ENCODE measurements at regions of chr7 and their contacts with region 1.

Region 1: DNA sequence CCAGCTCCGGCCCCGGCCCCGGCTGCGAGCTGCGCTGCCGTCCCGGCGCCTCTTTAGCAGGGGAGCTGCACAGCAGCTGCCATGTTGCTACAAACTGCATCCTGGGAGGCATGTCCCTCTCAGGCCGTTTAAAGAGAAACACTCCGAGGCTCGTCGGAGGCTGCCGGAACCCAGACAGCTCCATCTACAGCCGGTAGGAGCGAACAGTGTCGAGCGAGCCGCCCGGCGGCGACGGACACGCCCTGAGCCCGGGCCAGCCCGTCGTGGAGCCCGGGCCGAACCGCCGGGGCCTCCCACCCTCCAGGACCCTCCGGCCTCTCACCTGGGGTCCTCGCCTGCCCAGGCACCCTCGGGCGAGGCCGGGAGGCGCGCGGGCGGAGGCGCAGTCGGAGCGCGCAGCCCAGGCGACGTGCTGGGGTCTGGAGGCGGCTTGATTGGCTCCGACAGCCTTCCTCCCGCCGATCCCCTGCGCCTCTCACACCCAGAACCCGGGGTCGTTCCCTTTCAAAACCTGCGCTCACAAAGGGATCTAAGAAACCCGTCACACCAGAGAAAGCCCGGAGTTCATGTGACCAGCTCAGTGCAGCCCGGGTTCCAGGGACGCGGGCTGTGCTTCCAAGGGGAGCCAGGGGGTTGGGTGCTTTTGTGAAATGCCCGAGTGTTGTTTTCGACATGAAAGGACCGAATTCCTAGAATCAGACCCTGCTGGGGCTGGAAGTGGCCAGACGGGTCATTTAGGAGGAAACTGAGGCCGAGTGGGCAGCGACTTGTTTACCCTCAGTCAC is at the start of gene ZNF777:
- DNase-seq: peak; percentile 95
- H3K4me3 Mint-ChIP-seq: peak within 1 kb of the TSS; percentile 87
- H3K27ac Mint-ChIP-seq: peak within 1 kb of the TSS; percentile 79
- H3K4me1 Mint-ChIP-seq: peaks cover 21% of the 10 kb centered on the region
- H3K27me3 Mint-ChIP-seq: peaks cover 25% of the 10 kb centered on the region
- total RNA-seq, gene ZNF777: 18.2 and 19.2 TPM in 2 replicates

Region 2: GRCh38 chr7:149422129-149422913 is 38.4 kb before region 1 on chr7:
- intact Hi-C with region 1: loop called (anchors 1 kb)
- DNase-seq: peak; percentile 94
- H3K4me3 Mint-ChIP-seq: peak overlapping the region; percentile 79
- H3K27ac Mint-ChIP-seq: peak overlapping the region; percentile 66
- H3K4me1 Mint-ChIP-seq: peaks cover 5% of the 10 kb centered on the region
- H3K27me3 Mint-ChIP-seq: peaks cover 6% of the 10 kb centered on the region